ENCODE measurements at regions of chr7 and their contacts with region 1.

Region 1: GRCh38 chr7:121180436-121181063 is 148.2 kb upstream of the WNT16 start:
- DNase-seq: peak; percentile 83
- ATAC-seq: peak; percentile 87
- H3K4me3 ChIP-seq: peak overlapping the region in 2 of 5 experiments; percentile 11 to 31
- H3K4me3 Mint-ChIP-seq: peak overlapping the region; percentile 52
- H3K27ac ChIP-seq: peak overlapping the region; percentile 90 to 93
- H3K27ac Mint-ChIP-seq: peak overlapping the region; percentile 69
- H3K4me1 ChIP-seq: peaks cover 61 to 77% of the 10 kb centered on the region in 2 donors
- H3K4me1 Mint-ChIP-seq: peaks cover 71% of the 10 kb centered on the region
- H3K27me3 ChIP-seq: no peaks in the 10 kb centered on the region
- H3K27me3 Mint-ChIP-seq: no peaks in the 10 kb centered on the region
- CTCF ChIP-seq: no peak

Region 2: GRCh38 chr7:120695848-120696247 is 484.7 kb before region 1 on chr7:
- CTCF ChIA-PET with region 1: no interaction called
- POLR2A ChIA-PET with region 1: no interaction called
- intact Hi-C with region 1: no loop called
- DNase-seq: no peak
- ATAC-seq: no peak
- H3K4me3 ChIP-seq: no peak overlapping the region
- H3K4me3 Mint-ChIP-seq: no peak overlapping the region
- H3K27ac ChIP-seq: no peak overlapping the region
- H3K27ac Mint-ChIP-seq: no peak overlapping the region
- H3K4me1 ChIP-seq: no peaks in the 10 kb centered on the region
- H3K4me1 Mint-ChIP-seq: no peaks in the 10 kb centered on the region
- H3K27me3 ChIP-seq: no peaks in the 10 kb centered on the region
- H3K27me3 Mint-ChIP-seq: no peaks in the 10 kb centered on the region
- CTCF ChIP-seq: no peak

Region 3: DNA sequence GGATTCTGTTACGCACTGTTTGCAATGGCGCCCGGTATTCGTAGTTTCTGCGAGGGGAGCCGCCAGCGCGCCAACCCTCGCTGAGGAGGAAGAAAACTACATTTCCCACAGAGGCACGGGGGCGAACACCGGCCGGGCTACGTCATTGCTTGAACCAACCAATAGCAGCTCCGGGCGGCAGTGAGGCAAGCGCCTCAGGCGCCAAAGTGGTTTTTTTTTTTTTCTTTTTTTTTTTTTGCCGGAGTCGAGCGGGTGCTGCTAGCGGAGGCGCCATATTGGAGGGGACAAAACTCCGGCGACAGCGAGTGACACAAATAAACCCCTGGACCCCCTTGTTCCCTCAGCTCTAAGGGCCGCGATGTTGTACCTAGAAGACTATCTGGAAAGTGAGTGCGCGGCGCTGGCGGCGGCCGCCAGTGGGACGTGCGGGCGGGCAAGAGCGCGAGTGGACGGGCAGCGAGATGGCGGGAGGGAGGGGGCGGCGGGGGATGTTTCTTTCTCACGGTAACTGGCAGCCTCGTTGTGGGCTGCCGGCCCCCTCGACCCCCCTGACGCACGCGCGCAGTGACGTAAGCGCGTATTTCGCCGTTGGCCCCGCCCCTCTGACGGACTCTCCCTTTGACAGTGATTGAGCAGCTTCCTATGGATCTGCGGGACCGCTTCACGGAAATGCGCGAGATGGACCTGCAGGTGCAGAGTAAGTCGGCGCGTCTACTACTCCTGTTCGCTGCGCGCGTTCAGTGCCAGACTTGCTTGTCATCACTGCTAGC is 229.8 kb before region 1 on chr7 and contains the start of gene ING3:
- CTCF ChIA-PET with region 1: no interaction called
- POLR2A ChIA-PET with region 1: no interaction called
- intact Hi-C with region 1: loop called (anchors 5 kb)
- DNase-seq: peak; percentile 99
- ATAC-seq: peak; percentile 91
- H3K4me3 ChIP-seq: peak within 1 kb of the TSS; percentile 71 to 99 (median 83)
- H3K4me3 Mint-ChIP-seq: peak within 1 kb of the TSS; percentile 99
- H3K27ac ChIP-seq: peak within 1 kb of the TSS; percentile 95 to 96
- H3K27ac Mint-ChIP-seq: peak within 1 kb of the TSS; percentile 99
- H3K4me1 ChIP-seq: peaks cover 14 to 15% of the 10 kb centered on the region in 2 donors
- H3K4me1 Mint-ChIP-seq: peaks cover 20% of the 10 kb centered on the region
- H3K27me3 ChIP-seq: no peaks in the 10 kb centered on the region
- H3K27me3 Mint-ChIP-seq: peaks cover 3% of the 10 kb centered on the region
- CTCF ChIP-seq: no peak
- total RNA-seq, gene ING3: 38.0 and 41.7 TPM in 2 replicates

Region 4: GRCh38 chr7:121163699-121164098 is 16.9 kb before region 1 on chr7:
- CTCF ChIA-PET with region 1: interaction called, 9 read pairs
- POLR2A ChIA-PET with region 1: interaction called, 7 read pairs
- intact Hi-C with region 1: loop called (anchors 2 kb)
- DNase-seq: no peak
- ATAC-seq: peak; percentile 28
- H3K4me3 ChIP-seq: no peak overlapping the region
- H3K4me3 Mint-ChIP-seq: no peak overlapping the region
- H3K27ac ChIP-seq: no peak overlapping the region
- H3K27ac Mint-ChIP-seq: peak overlapping the region; percentile 81
- H3K4me1 ChIP-seq: peaks cover 27 to 35% of the 10 kb centered on the region in 2 donors
- H3K4me1 Mint-ChIP-seq: peaks cover 42% of the 10 kb centered on the region
- H3K27me3 ChIP-seq: no peaks in the 10 kb centered on the region
- H3K27me3 Mint-ChIP-seq: no peaks in the 10 kb centered on the region
- CTCF ChIP-seq: no peak

Region 5: DNA sequence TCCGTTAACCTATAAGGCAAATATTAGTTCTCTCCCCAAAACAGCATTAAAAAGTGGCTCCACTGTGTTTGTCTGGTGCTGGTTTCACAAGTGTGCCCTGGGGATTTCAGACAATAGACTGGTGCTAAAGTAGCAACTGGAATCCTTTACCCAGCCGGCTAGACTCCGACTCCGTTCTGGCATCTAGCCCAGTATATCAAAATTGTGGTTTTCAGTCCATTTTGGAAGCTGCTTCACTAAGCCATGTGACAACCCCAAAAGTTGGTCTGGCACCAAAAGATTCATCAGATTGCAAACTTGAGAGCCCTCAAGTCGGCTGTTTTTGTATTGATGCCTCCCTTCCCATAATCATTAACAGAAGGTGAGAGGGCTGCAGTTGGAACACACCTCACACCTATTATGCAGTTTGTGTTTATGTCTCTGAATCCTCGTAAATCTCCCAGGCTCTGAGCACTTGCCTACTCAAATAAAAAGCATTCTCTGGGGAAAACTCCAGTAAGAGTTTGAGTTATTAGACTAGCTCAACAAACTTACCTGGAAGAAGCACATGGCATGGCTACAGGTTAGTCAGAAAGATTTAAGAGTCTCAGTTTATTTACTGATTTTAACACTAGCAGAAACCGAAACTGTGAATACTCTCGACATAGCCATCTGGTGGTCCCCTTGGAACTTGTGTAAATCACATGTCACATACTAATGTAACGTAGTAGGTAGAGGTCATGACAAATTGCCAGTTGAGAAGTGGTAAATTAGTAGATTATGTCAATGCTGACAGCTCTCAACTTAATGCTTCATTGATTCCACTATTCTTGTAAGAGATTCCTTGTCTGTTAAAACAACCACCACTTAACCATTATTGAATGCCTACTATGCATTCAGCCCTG is 133.5 kb after region 1 on chr7:
- CTCF ChIA-PET with region 1: interaction called, 6 read pairs
- POLR2A ChIA-PET with region 1: no interaction called
- intact Hi-C with region 1: loop called (anchors 5 kb)
- DNase-seq: peak; percentile 54
- ATAC-seq: peak; percentile 88
- H3K4me3 ChIP-seq: peak overlapping the region in 3 of 5 experiments; percentile 17 to 28 (median 25)
- H3K4me3 Mint-ChIP-seq: peak overlapping the region; percentile 61
- H3K27ac ChIP-seq: peak overlapping the region; percentile 60 to 74
- H3K27ac Mint-ChIP-seq: peak overlapping the region; percentile 88
- H3K4me1 ChIP-seq: peaks cover 13 to 30% of the 10 kb centered on the region in 2 donors
- H3K4me1 Mint-ChIP-seq: peaks cover 44% of the 10 kb centered on the region
- H3K27me3 ChIP-seq: no peaks in the 10 kb centered on the region
- H3K27me3 Mint-ChIP-seq: no peaks in the 10 kb centered on the region
- CTCF ChIP-seq: no peak

Region 6: GRCh38 chr7:121385800-121386179 is 205.2 kb after region 1 on chr7:
- CTCF ChIA-PET with region 1: interaction called, 4 read pairs
- POLR2A ChIA-PET with region 1: no interaction called
- intact Hi-C with region 1: loop called (anchors 5 kb)
- DNase-seq: peak; percentile 89
- ATAC-seq: peak; percentile 89
- H3K4me3 ChIP-seq: peak overlapping the region in 1 of 5 experiments; percentile 37
- H3K4me3 Mint-ChIP-seq: peak overlapping the region; percentile 79
- H3K27ac ChIP-seq: peak overlapping the region; percentile 96 to 99
- H3K27ac Mint-ChIP-seq: peak overlapping the region; percentile 96
- H3K4me1 ChIP-seq: peaks cover 89 to 96% of the 10 kb centered on the region in 2 donors
- H3K4me1 Mint-ChIP-seq: peaks cover 92% of the 10 kb centered on the region
- H3K27me3 ChIP-seq: no peaks in the 10 kb centered on the region
- H3K27me3 Mint-ChIP-seq: no peaks in the 10 kb centered on the region
- CTCF ChIP-seq: no peak

Measured in B cell (primary cell).